Panc1 (cell line): ENCODE measurements at regions of chr5 and their contacts with region 1.

Region 1: GRCh38 chr5:110366721-110367120 is 359.8 kb downstream of the TMEM232 start:
- DNase-seq: no peak
- ATAC-seq: no peak
- H3K4me3 ChIP-seq: no peak overlapping the region
- H3K27ac ChIP-seq: no peak overlapping the region
- H3K4me1 ChIP-seq: no peaks in the 10 kb centered on the region
- H3K27me3 ChIP-seq: no peaks in the 10 kb centered on the region; the same call in 1 of the 2 replicates
- CTCF ChIP-seq: no peak

Region 2: DNA sequence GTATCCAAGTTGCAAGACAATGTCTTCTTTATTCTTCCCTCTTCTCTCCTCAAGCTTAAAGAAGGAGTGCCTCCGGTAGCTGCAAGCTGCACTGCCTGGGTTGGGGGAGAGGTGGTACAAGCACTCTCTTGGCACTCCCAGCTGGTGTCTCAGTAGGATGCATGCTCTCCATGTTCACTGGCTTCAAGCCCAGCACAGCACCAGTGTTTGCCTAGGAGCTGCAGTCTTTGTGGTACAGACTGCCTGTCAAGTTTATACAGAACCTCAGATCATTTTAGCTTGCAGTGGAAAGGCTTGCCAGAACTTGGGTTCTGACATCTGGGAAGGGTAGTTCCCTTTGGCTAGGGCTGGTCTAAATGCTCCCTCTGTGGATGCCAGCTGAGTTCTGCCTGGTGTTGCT is 171.4 kb before region 1 on chr5:
- CTCF ChIA-PET with region 1: no interaction called
- POLR2A ChIA-PET with region 1: no interaction called
- in situ Hi-C with region 1: no loop called
- intact Hi-C with region 1: no loop called
- DNase-seq: no peak
- ATAC-seq: no peak
- H3K4me3 ChIP-seq: no peak overlapping the region
- H3K27ac ChIP-seq: no peak overlapping the region
- H3K4me1 ChIP-seq: no peaks in the 10 kb centered on the region
- H3K27me3 ChIP-seq: no peaks in the 10 kb centered on the region
- CTCF ChIP-seq: no peak

Region 3: GRCh38 chr5:110321117-110321516 is 45.6 kb before region 1 on chr5:
- CTCF ChIA-PET with region 1: no interaction called
- POLR2A ChIA-PET with region 1: no interaction called
- in situ Hi-C with region 1: no loop called
- intact Hi-C with region 1: no loop called
- DNase-seq: no peak
- ATAC-seq: no peak
- H3K4me3 ChIP-seq: no peak overlapping the region
- H3K27ac ChIP-seq: no peak overlapping the region
- H3K4me1 ChIP-seq: no peaks in the 10 kb centered on the region
- H3K27me3 ChIP-seq: no peaks in the 10 kb centered on the region
- CTCF ChIP-seq: no peak

Region 4: DNA sequence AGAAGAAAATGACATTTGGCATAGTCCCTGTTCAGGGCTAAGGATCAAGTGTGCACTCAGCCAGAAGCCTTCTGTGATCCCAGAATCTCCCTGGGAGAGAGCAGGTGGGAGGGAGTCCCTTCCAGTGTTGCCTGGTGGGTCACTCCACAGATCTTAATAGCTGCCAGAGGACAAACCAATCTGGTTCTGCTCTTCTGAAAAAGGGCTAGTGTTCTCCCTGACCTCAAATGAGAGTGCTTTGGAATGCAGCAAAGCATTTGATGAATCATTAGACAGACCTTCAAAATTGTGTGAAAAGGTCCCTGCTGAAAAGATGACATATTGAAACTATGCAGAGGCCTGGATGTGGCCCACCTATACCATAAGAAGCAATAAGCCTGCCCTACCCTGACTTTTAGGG is 20.1 kb after region 1 on chr5:
- CTCF ChIA-PET with region 1: no interaction called
- POLR2A ChIA-PET with region 1: no interaction called
- in situ Hi-C with region 1: no loop called
- intact Hi-C with region 1: loop called (anchors 1 kb)
- DNase-seq: no peak
- ATAC-seq: no peak
- H3K4me3 ChIP-seq: no peak overlapping the region
- H3K27ac ChIP-seq: no peak overlapping the region
- H3K4me1 ChIP-seq: no peaks in the 10 kb centered on the region
- H3K27me3 ChIP-seq: no peaks in the 10 kb centered on the region
- CTCF ChIP-seq: no peak